Endothelial cell of umbilical vein (primary cell): ENCODE measurements at regions of chr19 and their contacts with region 1.

Region 1: DNA sequence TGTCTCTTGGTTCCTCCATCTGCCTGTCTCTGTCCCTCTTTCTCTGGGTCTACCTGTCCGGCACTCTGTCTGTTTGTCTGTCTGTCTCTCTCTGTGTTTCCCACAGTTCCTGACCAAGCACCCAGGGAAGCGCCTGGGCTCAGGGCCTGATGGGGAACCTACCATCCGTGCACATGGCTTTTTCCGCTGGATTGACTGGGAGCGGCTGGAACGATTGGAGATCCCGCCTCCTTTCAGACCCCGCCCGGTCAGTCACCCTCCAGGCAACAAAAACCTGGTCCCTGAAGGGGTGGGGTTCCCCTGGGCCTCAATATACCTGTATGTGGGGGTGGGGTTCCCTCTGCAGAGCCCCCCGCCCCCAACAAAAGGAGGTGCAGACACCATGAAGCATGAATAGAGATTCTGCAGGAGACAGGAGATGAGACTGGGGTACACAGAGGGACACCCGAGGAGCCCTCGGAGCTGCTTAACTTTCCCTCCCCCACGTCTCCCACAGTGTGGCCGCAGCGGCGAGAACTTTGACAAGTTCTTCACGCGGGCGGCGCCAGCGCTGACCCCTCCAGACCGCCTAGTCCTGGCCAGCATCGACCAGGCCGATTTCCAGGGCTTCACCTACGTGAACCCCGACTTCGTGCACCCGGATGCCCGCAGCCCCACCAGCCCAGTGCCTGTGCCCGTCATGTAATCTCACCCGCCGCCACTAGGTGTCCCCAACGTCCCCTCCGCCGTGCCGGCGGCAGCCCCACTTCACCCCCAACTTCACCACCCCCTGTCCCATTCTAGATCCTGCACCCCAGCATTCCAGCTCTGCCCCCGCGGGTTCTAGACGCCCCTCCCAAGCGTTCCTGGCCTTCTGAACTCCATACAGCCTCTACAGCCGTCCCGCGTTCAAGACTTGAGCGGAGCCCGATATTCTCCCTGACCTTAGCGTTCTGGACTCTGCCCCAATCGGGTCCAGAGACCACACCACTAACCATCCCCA is 2.6 kb upstream of the CACNG7 start:
- DNase-seq: no peak
- H3K4me3 ChIP-seq: no peak overlapping the region
- H3K27ac ChIP-seq: no peak overlapping the region
- H3K4me1 ChIP-seq: peaks cover 6% of the 10 kb centered on the region
- H3K27me3 ChIP-seq: peaks cover 31 to 35% of the 10 kb centered on the region in 2 experiments
- CTCF ChIP-seq: peak; percentile 77 to 93
- POLR2A ChIP-seq: no peak

Region 2: DNA sequence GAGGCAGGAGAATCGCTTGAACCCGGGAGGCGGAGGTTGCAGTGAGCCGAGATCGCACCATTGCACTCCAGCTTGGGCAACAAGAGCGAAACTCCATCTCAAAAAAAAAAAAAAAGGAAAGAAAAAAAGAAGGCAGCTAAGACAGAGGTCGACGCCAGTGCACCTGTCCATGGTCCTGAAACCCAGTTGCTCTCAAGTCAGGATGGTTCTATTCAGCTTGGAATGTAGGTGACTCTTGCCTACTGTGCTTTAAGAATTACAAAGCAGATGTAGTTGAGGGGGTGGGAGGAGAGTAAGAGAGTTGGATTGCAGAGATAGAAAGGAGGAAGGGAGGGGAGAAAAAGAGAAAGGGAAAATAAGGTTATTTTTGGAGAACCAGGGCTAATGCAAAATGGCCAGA is 21.2 kb after region 1 on chr19:
- CTCF ChIA-PET with region 1: no interaction called
- POLR2A ChIA-PET with region 1: no interaction called
- dilution Hi-C with region 1: no loop called
- intact Hi-C with region 1: loop called (anchors 1 kb)
- DNase-seq: peak; percentile 51
- H3K4me3 ChIP-seq: no peak overlapping the region
- H3K27ac ChIP-seq: no peak overlapping the region
- H3K4me1 ChIP-seq: no peaks in the 10 kb centered on the region
- H3K27me3 ChIP-seq: no peaks in the 10 kb centered on the region
- CTCF ChIP-seq: no peak
- POLR2A ChIP-seq: no peak

Region 3: GRCh38 chr19:53942001-53942786 is 35.7 kb after region 1 on chr19:
- CTCF ChIA-PET with region 1: no interaction called
- POLR2A ChIA-PET with region 1: no interaction called
- dilution Hi-C with region 1: no loop called
- intact Hi-C with region 1: no loop called
- DNase-seq: peak; percentile 10
- H3K4me3 ChIP-seq: no peak overlapping the region
- H3K27ac ChIP-seq: no peak overlapping the region
- H3K4me1 ChIP-seq: no peaks in the 10 kb centered on the region
- H3K27me3 ChIP-seq: peaks cover 11 to 30% of the 10 kb centered on the region in 2 experiments
- CTCF ChIP-seq: peak in 1 of 2 donors; percentile 12
- POLR2A ChIP-seq: no peak

Region 4: GRCh38 chr19:53977991-53978731 is 71.7 kb after region 1 on chr19:
- CTCF ChIA-PET with region 1: no interaction called
- POLR2A ChIA-PET with region 1: no interaction called
- dilution Hi-C with region 1: no loop called
- intact Hi-C with region 1: loop called (anchors 1 kb)
- DNase-seq: peak; percentile 94
- H3K4me3 ChIP-seq: peak overlapping the region in 1 of 3 experiments; percentile 30
- H3K27ac ChIP-seq: no peak overlapping the region
- H3K4me1 ChIP-seq: peaks cover 19% of the 10 kb centered on the region
- H3K27me3 ChIP-seq: no peaks in the 10 kb centered on the region
- CTCF ChIP-seq: no peak
- POLR2A ChIP-seq: no peak

Region 5: DNA sequence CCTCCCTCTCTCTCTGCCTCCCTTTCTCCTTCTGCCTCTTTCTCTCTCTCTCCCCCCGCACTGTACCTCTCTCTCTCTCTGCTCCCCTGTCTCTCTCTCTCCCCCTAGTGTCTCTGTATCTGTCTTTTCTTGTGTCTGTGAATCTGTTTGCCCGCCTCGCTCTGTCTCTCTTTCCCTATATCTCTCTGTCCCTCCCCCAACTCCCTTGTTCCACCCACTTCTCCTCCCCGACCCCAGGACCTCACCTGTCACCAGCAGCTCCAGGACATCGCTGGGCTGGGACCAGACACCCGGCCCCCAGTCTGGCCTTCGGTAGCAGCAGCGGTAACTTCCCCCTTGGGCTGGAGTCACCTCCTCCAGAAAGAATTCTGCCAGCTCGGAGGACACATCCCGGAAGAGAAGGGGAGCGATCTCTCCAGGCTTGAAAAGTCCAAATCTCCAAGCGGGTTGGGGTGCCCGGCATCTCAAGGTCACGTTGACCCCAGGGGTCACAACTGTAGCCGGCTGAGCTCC is 190.2 kb after region 1 on chr19:
- CTCF ChIA-PET with region 1: interaction called, 3 read pairs
- POLR2A ChIA-PET with region 1: no interaction called
- dilution Hi-C with region 1: no loop called
- intact Hi-C with region 1: loop called (anchors 5 kb)
- DNase-seq: no peak
- H3K4me3 ChIP-seq: no peak overlapping the region
- H3K27ac ChIP-seq: no peak overlapping the region
- H3K4me1 ChIP-seq: no peaks in the 10 kb centered on the region
- H3K27me3 ChIP-seq: no peaks in the 10 kb centered on the region
- CTCF ChIP-seq: peak in 1 of 2 donors; percentile 15
- POLR2A ChIP-seq: no peak